SK-N-SH (cell line): ENCODE measurements at regions of chr22 and their contacts with region 1.

Region 1: GRCh38 chr22:36741204-36741793 is 34.6 kb downstream of the IFT27 start:
- DNase-seq: peak; percentile 75
- H3K4me3 ChIP-seq: no peak overlapping the region
- H3K27ac ChIP-seq: no peak overlapping the region
- H3K4me1 ChIP-seq: peaks cover 0 to 11% of the 10 kb centered on the region in 2 experiments; a peak in 1 of 4 replicates
- H3K27me3 ChIP-seq: peaks cover 5% of the 10 kb centered on the region; the same call in 1 of the 2 replicates
- CTCF ChIP-seq: no peak
- EP300 ChIP-seq: no peak
- RAD21 ChIP-seq: no peak

Region 2: GRCh38 chr22:36577019-36577418 is 164.3 kb before region 1 on chr22:
- CTCF ChIA-PET with region 1: no interaction called
- POLR2A ChIA-PET with region 1: no interaction called
- DNase-seq: no peak
- H3K4me3 ChIP-seq: no peak overlapping the region
- H3K27ac ChIP-seq: no peak overlapping the region
- H3K4me1 ChIP-seq: no peaks in the 10 kb centered on the region; a peak in 1 of 4 replicates
- H3K27me3 ChIP-seq: no peaks in the 10 kb centered on the region
- CTCF ChIP-seq: no peak
- EP300 ChIP-seq: peak in 1 of 2 experiments; percentile 69; a peak in 1 of 4 replicates
- RAD21 ChIP-seq: no peak

Region 3: GRCh38 chr22:36757668-36758211 is 16.4 kb after region 1 on chr22:
- CTCF ChIA-PET with region 1: interaction called, 52 read pairs
- POLR2A ChIA-PET with region 1: interaction called, 3 read pairs
- DNase-seq: peak; percentile 83
- H3K4me3 ChIP-seq: no peak overlapping the region; a peak in 1 of 4 replicates
- H3K27ac ChIP-seq: no peak overlapping the region; a peak in 1 of 4 replicates
- H3K4me1 ChIP-seq: peaks cover 0 to 5% of the 10 kb centered on the region in 2 experiments; a peak in 1 of 4 replicates
- H3K27me3 ChIP-seq: no peaks in the 10 kb centered on the region
- CTCF ChIP-seq: peak; percentile 75
- EP300 ChIP-seq: no peak
- RAD21 ChIP-seq: peak; percentile 67